Left cardiac atrium (tissue), 4 donors: ENCODE measurements at regions of chr11 and their contacts with region 1.

Region 1: GRCh38 chr11:8092587-8093424 is 11.8 kb downstream of the TUB start:
- DNase-seq: peak; percentile 82
- ATAC-seq: peak; percentile 71 to 78

Region 2: GRCh38 chr11:8006349-8006977 is 86.3 kb before region 1 on chr11:
- intact Hi-C with region 1: loop called in 1 of 2 experiments (anchors 5 kb)
- DNase-seq: peak; percentile 41
- ATAC-seq: peak; percentile 90 to 93